AG04450 (cell line): ENCODE measurements at regions of chr20 and their contacts with region 1.

Region 1: DNA sequence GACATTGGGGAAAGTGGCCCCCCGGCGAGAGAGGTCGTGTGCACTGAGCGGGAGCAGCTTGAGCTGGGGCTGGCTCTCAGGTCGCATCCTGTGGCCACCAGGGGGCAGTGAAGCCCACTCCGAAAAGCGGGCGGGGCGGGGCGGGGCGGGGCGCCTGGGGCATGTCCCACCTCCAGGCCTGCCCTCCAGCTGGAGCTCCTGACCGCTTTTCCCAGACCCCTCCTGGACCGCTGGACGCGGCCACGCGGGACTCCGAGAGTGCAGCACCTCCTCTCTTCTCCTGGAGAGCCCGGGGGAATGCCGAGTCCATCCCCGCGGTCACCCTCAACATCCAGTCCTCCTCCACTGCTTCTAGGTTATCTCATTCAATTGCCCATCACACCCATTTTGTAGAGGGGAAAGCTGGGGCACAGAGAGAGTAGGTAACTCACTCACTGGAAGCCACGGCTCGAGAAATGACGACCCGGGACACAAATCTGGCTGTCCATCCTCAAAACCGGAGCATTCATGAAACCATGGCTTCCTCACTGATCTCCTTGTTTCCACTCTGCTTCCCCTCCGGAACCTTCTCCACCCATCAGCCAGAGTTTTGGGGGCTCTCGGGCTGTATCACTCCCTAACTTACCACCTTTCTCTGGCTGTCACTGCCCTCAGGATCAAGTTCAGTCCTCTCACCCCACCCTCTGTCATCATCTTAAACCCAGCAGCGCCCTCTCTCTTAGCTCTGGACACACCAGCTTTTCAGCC is 24.1 kb downstream of the COX4I2 start:
- DNase-seq: no peak
- H3K4me3 ChIP-seq: peak overlapping the region; percentile 48
- H3K27ac ChIP-seq: peak overlapping the region; percentile 47
- H3K27me3 ChIP-seq: no peaks in the 10 kb centered on the region
- CTCF ChIP-seq: peak; percentile 62

Region 2: GRCh38 chr20:31630187-31630790 is 31.5 kb before region 1 on chr20:
- CTCF ChIA-PET with region 1: interaction called, 26 read pairs
- POLR2A ChIA-PET with region 1: interaction called, 6 read pairs
- DNase-seq: no peak
- H3K4me3 ChIP-seq: no peak overlapping the region
- H3K27ac ChIP-seq: no peak overlapping the region
- H3K27me3 ChIP-seq: no peaks in the 10 kb centered on the region
- CTCF ChIP-seq: no peak

Region 3: DNA sequence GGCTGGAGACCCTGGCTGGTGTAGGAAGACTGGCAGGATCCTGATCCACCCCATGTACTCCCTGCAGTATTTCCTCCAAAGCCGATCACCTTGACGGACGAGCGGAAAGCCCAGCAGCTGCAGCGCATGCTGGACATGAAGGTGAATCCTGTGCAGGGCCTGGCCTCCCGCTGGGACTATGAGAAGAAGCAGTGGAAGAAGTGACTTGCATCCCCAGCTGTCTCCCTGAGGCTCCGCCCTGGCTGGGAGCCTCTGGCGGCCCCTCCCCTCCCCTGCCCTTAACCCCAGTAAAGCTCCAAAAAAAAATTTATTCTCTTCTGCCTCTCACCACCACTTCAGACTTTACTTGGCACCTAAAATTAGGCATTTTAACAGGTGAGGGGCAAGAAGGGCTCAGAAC is 17.1 kb before region 1 on chr20:
- CTCF ChIA-PET with region 1: interaction called, 17 read pairs
- POLR2A ChIA-PET with region 1: no interaction called
- DNase-seq: no peak
- H3K4me3 ChIP-seq: no peak overlapping the region
- H3K27ac ChIP-seq: no peak overlapping the region
- H3K27me3 ChIP-seq: peaks cover 19% of the 10 kb centered on the region
- CTCF ChIP-seq: no peak

Region 4: DNA sequence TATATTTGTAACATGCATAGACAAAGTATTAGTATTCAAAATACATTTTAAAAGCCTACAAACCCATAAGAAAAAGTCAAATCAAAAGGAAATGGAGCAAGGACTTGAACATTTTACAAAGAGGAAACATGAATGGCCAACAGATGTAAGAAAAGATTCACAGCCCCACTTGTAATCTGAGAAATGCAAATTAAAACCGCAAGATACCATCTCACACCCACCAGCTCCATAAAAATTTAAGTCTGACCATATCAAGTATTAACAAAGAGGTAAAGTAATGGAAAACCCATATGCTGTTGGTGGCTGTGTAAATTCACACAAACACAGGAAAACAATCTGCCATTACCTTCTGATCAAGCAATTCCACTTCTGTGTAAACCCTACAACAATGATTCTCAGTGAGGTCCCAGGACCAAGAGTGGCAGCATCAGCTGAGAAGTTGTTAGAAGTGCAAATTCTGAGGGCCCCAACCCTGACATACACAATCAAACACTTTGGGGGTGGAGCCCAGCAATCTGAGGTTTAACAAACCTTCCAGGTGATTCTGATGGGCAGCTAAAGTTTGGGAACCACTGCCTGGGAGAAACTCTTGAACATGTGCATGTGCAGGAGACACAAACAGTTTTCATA is 30.0 kb after region 1 on chr20:
- CTCF ChIA-PET with region 1: interaction called, 14 read pairs
- POLR2A ChIA-PET with region 1: interaction called, 3 read pairs
- DNase-seq: no peak
- H3K4me3 ChIP-seq: no peak overlapping the region
- H3K27ac ChIP-seq: no peak overlapping the region
- H3K27me3 ChIP-seq: no peaks in the 10 kb centered on the region
- CTCF ChIP-seq: no peak

Region 5: GRCh38 chr20:31704225-31705119 is 42.7 kb after region 1 on chr20:
- CTCF ChIA-PET with region 1: interaction called, 14 read pairs
- POLR2A ChIA-PET with region 1: interaction called, 10 read pairs
- DNase-seq: no peak
- H3K4me3 ChIP-seq: no peak overlapping the region
- H3K27ac ChIP-seq: peak overlapping the region; percentile 75
- H3K27me3 ChIP-seq: no peaks in the 10 kb centered on the region
- CTCF ChIP-seq: no peak

Region 6: GRCh38 chr20:31738729-31739561 is 77.1 kb after region 1 on chr20 and contains the start of gene TPX2:
- CTCF ChIA-PET with region 1: interaction called, 18 read pairs
- POLR2A ChIA-PET with region 1: interaction called, 6 read pairs
- DNase-seq: peak; percentile 86
- H3K4me3 ChIP-seq: peak within 1 kb of the TSS; percentile 97
- H3K27ac ChIP-seq: peak within 1 kb of the TSS; percentile 68
- H3K27me3 ChIP-seq: no peaks in the 10 kb centered on the region
- CTCF ChIP-seq: no peak; the same call in 1 of the 2 replicates
- polyA plus RNA-seq, gene TPX2: 19.8 and 24.4 TPM in 2 replicates

Region 7: DNA sequence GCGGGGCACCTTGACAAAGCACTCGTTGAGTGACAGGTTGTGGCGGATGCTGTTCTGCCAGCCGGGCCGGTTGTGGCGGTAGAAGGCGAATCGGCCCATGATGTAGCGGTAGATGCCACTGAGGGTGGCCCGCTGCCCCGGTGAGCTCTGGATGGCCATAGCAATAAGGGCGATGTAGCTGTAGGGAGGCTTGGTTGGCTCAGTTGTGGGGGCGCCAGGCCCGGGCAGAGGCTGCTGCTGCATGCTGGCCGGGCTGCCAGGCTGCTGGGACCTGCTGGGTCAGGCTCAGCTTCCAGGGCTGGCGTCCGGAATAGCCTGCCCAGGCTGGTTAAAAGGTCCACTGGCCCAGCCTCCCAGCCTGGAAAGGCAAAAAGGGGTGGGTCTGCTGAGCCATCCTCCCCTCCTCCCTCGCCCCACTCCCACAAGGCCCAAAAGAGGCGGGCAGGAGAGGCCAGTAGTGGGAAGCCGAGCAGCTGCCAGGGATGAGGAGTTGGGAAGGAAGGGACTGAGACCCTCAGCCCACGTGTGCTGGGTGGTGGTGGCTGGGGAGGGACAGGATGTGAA is 183.6 kb after region 1 on chr20 and contains the start of gene FOXS1:
- CTCF ChIA-PET with region 1: no interaction called
- POLR2A ChIA-PET with region 1: no interaction called
- DNase-seq: no peak
- H3K4me3 ChIP-seq: no peak within 1 kb of the TSS
- H3K27ac ChIP-seq: no peak within 1 kb of the TSS
- H3K27me3 ChIP-seq: peaks cover 33% of the 10 kb centered on the region
- CTCF ChIP-seq: no peak
- polyA plus RNA-seq, gene FOXS1: not detected in 2 replicates